ENCODE measurements at regions of chr19 and their contacts with region 1.

Region 1: GRCh38 chr19:52189735-52190486 is at the start of gene PPP2R1A:
- DNase-seq: peak; percentile 96
- ATAC-seq: peak; percentile 78
- H3K4me3 Mint-ChIP-seq: peak within 1 kb of the TSS; percentile 95
- H3K27ac Mint-ChIP-seq: peak within 1 kb of the TSS; percentile 98
- H3K4me1 Mint-ChIP-seq: peaks cover 54% of the 10 kb centered on the region
- H3K27me3 Mint-ChIP-seq: no peaks in the 10 kb centered on the region
- CTCF ChIP-seq: no peak
- total RNA-seq, gene PPP2R1A: 244 and 245 TPM in 2 replicates

Region 2: GRCh38 chr19:52028027-52028779 is 161.7 kb before region 1 on chr19 and contains the start of gene ZNF614:
- CTCF ChIA-PET with region 1: no interaction called
- POLR2A ChIA-PET with region 1: interaction called, 7 read pairs
- intact Hi-C with region 1: loop called (anchors 1 kb)
- DNase-seq: peak; percentile 86
- ATAC-seq: peak; percentile 89
- H3K4me3 Mint-ChIP-seq: peak within 1 kb of the TSS; percentile 98
- H3K27ac Mint-ChIP-seq: peak within 1 kb of the TSS; percentile 93
- H3K4me1 Mint-ChIP-seq: peaks cover 29% of the 10 kb centered on the region
- H3K27me3 Mint-ChIP-seq: no peaks in the 10 kb centered on the region
- CTCF ChIP-seq: no peak
- total RNA-seq, gene ZNF614: 14.0 and 14.3 TPM in 2 replicates

Region 3: DNA sequence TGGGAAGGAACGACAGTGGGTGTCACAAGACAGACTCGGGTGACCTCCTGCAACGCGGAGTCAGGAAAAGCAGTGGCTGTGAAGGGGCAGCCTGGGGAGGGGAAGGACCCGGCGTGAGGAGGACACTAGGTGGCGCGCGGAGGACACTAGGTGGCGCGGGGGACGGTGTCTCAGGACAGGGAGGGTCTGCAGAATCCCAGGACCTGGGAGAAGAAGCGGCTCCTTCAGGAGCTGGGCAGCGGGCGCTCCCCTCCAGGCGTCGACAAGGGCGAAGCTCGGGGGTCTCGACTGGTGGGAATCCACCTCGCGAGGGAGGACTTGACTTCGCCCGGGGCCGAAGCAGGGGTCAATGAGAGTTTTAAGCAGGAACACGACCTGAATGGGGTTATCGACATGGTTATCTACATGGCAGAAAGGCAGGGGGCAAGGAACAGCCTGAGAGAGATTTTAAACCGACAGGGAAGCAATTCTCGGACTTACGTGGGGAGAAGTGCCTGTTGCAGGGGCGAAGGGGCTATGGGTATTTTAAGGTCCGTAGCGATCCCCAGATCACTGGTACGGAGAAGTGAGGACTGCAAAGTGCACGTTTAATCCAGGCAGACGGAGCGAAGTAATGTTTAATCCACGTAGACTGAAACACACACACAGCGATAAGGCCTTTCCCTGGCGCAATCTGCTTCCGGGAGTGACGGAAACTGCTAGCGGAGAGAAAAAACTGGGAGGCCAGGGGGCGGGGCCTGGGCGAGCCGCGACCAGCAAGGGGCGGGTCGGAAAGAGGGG is 50.5 kb before region 1 on chr19 and contains the start of gene ZNF616:
- CTCF ChIA-PET with region 1: interaction called, 5 read pairs
- POLR2A ChIA-PET with region 1: interaction called, 30 read pairs
- intact Hi-C with region 1: loop called (anchors 1 kb)
- DNase-seq: peak; percentile 74
- ATAC-seq: peak; percentile 59
- H3K4me3 Mint-ChIP-seq: peak within 1 kb of the TSS; percentile 97
- H3K27ac Mint-ChIP-seq: peak within 1 kb of the TSS; percentile 93
- H3K4me1 Mint-ChIP-seq: peaks cover 25% of the 10 kb centered on the region
- H3K27me3 Mint-ChIP-seq: no peaks in the 10 kb centered on the region
- CTCF ChIP-seq: no peak
- total RNA-seq, gene ZNF616: 7.3 and 7.4 TPM in 2 replicates

Region 4: GRCh38 chr19:52231154-52231910 is 41.4 kb after region 1 on chr19:
- CTCF ChIA-PET with region 1: no interaction called
- POLR2A ChIA-PET with region 1: interaction called, 6 read pairs
- intact Hi-C with region 1: loop called (anchors 5 kb)
- DNase-seq: no peak
- ATAC-seq: no peak
- H3K4me3 Mint-ChIP-seq: no peak overlapping the region
- H3K27ac Mint-ChIP-seq: peak overlapping the region; percentile 19
- H3K4me1 Mint-ChIP-seq: no peaks in the 10 kb centered on the region
- H3K27me3 Mint-ChIP-seq: no peaks in the 10 kb centered on the region
- CTCF ChIP-seq: no peak

Region 5: DNA sequence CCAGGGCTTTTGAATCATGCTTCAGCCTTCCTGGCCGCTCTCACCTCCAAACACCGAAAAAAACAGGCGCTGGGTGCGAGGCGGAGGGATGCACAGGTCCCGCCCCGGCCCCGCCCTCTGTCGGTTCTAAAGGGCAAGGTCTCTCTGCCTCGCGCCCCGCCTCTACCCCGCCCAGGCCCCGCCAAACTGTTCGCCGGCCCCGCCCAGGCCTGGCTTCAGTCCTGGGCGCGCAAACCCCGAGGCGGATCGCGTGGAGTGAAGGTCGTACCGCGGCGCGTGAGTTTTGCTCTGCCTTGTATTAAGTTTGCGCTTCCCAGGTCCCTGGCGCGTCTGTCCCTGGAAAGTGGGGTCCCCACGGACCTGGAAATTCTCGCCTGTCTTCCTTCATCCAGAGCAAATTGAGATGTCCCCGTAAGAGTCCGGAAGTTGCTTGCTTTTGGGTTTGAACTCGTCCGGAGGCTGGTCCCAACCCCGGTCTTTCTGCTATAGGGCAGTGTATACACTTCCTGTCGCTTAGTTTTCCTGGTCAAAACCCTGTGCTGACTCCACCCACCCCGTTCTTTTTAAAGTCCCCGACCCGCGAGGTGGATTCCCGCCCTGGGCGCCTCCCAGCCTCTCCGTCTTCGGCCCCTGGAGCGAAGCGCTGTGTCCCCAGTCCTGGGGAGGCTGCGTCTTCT is 346.0 kb after region 1 on chr19:
- CTCF ChIA-PET with region 1: no interaction called
- POLR2A ChIA-PET with region 1: no interaction called
- intact Hi-C with region 1: loop called (anchors 5 kb)
- DNase-seq: peak; percentile 86
- ATAC-seq: peak; percentile 98
- H3K4me3 Mint-ChIP-seq: peak overlapping the region; percentile 92
- H3K27ac Mint-ChIP-seq: peak overlapping the region; percentile 86
- H3K4me1 Mint-ChIP-seq: peaks cover 23% of the 10 kb centered on the region
- H3K27me3 Mint-ChIP-seq: no peaks in the 10 kb centered on the region
- CTCF ChIP-seq: no peak

Region 6: DNA sequence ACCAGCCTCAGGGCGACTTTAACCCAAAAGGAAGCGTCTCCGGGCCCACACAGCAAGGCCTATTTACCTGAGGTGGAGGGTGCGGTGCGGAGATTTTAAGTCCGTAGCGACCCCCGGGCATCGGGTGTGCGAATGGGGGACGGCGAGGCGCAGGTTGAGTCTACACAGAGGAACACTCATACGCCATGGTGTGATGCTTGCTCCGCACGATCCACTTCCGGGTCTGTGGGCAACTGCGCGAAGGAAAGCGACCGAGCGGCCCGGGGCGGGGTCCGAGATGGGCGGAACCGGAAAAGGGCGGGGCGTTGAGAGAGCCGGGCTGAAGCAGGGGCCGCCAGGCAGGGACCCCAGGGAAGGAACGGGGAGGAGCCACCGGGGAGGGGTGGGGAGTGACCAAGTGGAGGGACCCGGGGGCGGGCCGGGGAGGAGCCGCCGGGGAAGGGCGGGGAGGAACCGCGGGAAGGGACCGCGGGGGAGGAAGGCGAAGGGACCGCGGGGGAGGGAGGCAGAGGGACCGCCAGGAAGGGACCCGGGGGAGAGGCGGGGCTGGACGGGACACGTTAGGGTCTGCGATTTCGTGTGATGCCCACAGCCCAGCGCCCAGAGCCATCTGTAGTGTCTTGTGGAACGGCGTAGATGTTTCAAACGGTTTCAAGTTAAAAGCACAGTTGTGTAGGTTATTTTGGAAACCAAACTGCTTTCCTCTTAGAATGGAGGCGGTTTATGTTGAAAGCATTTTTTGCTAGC is 913.5 kb after region 1 on chr19 and contains the start of gene ZNF160:
- CTCF ChIA-PET with region 1: no interaction called
- POLR2A ChIA-PET with region 1: no interaction called
- intact Hi-C with region 1: loop called (anchors 1 kb)
- DNase-seq: peak; percentile 100
- ATAC-seq: peak; percentile 97
- H3K4me3 Mint-ChIP-seq: peak within 1 kb of the TSS; percentile 87
- H3K27ac Mint-ChIP-seq: peak within 1 kb of the TSS; percentile 93
- H3K4me1 Mint-ChIP-seq: peaks cover 32% of the 10 kb centered on the region
- H3K27me3 Mint-ChIP-seq: no peaks in the 10 kb centered on the region
- CTCF ChIP-seq: no peak
- total RNA-seq, gene ZNF160: 46.3 and 61.3 TPM in 2 replicates